Pancreas (tissue), 10 donors: ENCODE measurements at regions of chr4 and their contacts with region 1.

Region 1: DNA sequence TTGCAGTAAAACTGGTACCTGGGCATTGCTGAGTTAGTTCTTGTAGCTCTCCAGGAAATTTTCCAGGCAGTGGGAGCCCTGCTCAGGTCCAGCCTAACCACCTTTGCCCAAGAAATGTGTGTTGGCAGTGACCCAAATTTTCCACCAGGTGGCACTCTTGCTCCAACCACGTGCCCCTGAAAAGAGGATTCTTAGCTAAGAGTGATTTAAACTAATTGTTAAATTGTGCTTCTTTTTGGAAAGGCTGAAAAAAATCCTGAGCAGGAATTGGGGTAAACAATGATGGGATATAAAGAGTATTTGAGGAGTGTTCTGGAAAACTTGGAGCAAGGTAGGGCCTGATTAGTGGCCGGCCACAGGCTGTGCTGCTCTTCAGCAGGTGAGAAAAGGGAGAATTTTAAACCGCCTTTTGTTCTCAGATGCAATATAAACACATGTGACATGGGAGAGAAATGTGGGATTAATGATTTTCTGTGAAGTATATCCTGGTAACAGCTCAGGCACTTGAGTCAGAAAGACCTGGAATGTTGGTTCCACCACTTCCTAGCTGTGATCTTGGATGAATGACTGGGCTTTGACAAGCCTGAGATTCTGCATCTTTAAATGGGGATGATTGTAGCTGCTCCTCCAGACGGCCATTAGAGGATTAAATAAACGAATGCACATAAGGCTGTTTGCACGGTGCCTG is 219.6 kb downstream of the PTTG2 start:
- DNase-seq: peak; percentile 76 to 87 (median 78)
- ATAC-seq: peak; percentile 74 to 80 (median 80)
- H3K4me3 ChIP-seq: no peak overlapping the region
- H3K27ac ChIP-seq: peak overlapping the region in 1 of 4 donors; percentile 57
- H3K4me1 ChIP-seq: peaks cover 10 to 20% (median 17%) of the 10 kb centered on the region in 3 donors
- H3K27me3 ChIP-seq: no peaks in the 10 kb centered on the region
- CTCF ChIP-seq: peak; percentile 68 to 88 (median 84)

Region 2: GRCh38 chr4:38062088-38062893 is 117.5 kb before region 1 on chr4:
- intact Hi-C with region 1: loop called in 2 of 3 experiments (anchors 10 kb)
- DNase-seq: peak in 5 of 6 donors; percentile 70 to 83 (median 77)
- ATAC-seq: peak; percentile 81 to 97 (median 94)
- H3K4me3 ChIP-seq: peak overlapping the region in 2 of 4 donors; percentile 7 to 32
- H3K27ac ChIP-seq: peak overlapping the region in 2 of 4 donors; percentile 60 to 65
- H3K4me1 ChIP-seq: peaks cover 0 to 6% (median 0%) of the 10 kb centered on the region in 3 donors
- H3K27me3 ChIP-seq: no peaks in the 10 kb centered on the region
- CTCF ChIP-seq: peak; percentile 60 to 81 (median 78)

Region 3: GRCh38 chr4:38675146-38676121 is 495.6 kb after region 1 on chr4:
- intact Hi-C with region 1: loop called in 2 of 3 experiments (anchors 5 to 10 kb)
- DNase-seq: peak in 5 of 6 donors; percentile 62 to 81 (median 72)
- ATAC-seq: peak; percentile 58 to 76 (median 66)
- H3K4me3 ChIP-seq: peak overlapping the region in 1 of 4 donors; percentile 8
- H3K27ac ChIP-seq: peak overlapping the region in 3 of 4 donors; percentile 63 to 99 (median 74)
- H3K4me1 ChIP-seq: peaks cover 43 to 67% (median 50%) of the 10 kb centered on the region in 3 donors
- H3K27me3 ChIP-seq: no peaks in the 10 kb centered on the region
- CTCF ChIP-seq: peak; percentile 65 to 84 (median 78)